Caco-2 (cell line): ENCODE measurements at regions of chr14 and their contacts with region 1.

Region 1: GRCh38 chr14:63896278-63896720 is 43.5 kb downstream of the SYNE2 start:
- DNase-seq: no peak
- H3K4me3 ChIP-seq: no peak overlapping the region
- H3K4me3 Mint-ChIP-seq: no peak overlapping the region
- H3K27ac Mint-ChIP-seq: no peak overlapping the region
- H3K4me1 ChIP-seq: no peaks in the 10 kb centered on the region
- H3K4me1 Mint-ChIP-seq: peaks cover 7% of the 10 kb centered on the region
- H3K27me3 ChIP-seq: no peaks in the 10 kb centered on the region
- H3K27me3 Mint-ChIP-seq: no peaks in the 10 kb centered on the region
- CTCF ChIP-seq: no peak

Region 2: DNA sequence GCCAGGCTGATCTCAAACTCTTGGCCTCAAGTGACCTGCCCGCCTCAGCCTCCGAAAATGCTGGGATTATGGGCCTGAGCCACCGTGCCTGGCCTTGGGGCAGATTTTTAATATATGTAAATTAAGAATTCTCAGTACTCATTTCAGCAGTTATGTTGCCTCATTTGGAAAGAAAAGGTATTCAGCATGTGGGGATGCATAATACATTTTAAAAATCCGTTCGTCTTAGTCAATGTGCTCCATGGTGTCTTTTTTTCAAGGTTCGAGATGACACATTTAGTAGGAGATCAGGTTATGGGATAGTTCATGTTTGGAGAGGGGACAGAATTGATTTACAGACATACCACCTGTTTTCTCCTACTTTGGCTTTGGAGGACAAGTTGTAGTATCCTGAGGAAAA is 33.3 kb before region 1 on chr14:
- CTCF ChIA-PET with region 1: no interaction called
- POLR2A ChIA-PET with region 1: interaction called, 4 read pairs
- intact Hi-C with region 1: loop called (anchors 5 kb)
- DNase-seq: no peak
- H3K4me3 ChIP-seq: no peak overlapping the region
- H3K4me3 Mint-ChIP-seq: no peak overlapping the region
- H3K27ac Mint-ChIP-seq: no peak overlapping the region
- H3K4me1 ChIP-seq: 0 out of 2 replicates have a peak, but pooled peaks cover 8% of the 10 kb centered on the region
- H3K4me1 Mint-ChIP-seq: no peaks in the 10 kb centered on the region
- H3K27me3 ChIP-seq: no peaks in the 10 kb centered on the region
- H3K27me3 Mint-ChIP-seq: no peaks in the 10 kb centered on the region
- CTCF ChIP-seq: no peak

Region 3: DNA sequence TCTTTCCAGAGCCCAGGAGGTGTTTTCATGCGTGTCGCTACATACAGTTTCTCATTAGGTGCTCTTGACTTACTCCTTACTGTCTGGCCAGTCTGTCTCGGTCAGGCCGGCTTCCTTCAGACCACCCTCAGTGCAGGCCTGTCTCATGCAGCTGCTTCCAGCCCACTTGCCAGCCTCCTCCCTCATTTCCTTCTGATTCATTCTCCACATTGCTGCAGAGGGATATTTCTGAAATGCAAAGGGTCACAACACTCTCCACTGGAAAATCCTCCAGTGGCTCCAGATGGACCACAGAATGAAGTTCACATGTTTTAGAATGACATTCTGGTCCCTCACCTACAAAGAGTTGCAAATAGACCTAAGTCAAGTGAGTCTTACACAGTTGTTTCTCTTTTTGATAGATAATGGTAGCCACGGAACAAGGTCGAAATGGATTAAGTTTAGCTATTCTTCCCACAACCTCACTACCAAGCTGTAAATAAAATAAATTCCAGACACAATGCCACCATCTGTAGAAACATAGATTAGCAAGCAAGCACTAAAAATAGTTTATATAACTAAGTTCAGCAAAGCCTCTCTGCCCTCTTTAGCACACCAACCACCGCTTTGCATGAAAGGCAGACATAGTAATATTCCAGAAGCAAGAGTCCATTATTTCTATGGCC is 251.0 kb after region 1 on chr14:
- CTCF ChIA-PET with region 1: no interaction called
- POLR2A ChIA-PET with region 1: no interaction called
- intact Hi-C with region 1: no loop called
- DNase-seq: no peak
- H3K4me3 ChIP-seq: no peak overlapping the region
- H3K4me3 Mint-ChIP-seq: no peak overlapping the region
- H3K27ac Mint-ChIP-seq: no peak overlapping the region
- H3K4me1 ChIP-seq: no peaks in the 10 kb centered on the region
- H3K4me1 Mint-ChIP-seq: no peaks in the 10 kb centered on the region
- H3K27me3 ChIP-seq: no peaks in the 10 kb centered on the region
- H3K27me3 Mint-ChIP-seq: no peaks in the 10 kb centered on the region
- CTCF ChIP-seq: no peak